Activated T-helper 2 cell treated with anti-CD3 and anti-CD28 coated beads, Interferon-gamma antibody, Interleukin-2, Interleukin-4, amounts not matched to agents 10 μg/mL and 5 μg/mL and 100 μg/mL, durations not matched to agents 14 hours and 24 hours and 36 hours (primary cell): ENCODE measurements at regions of chr13 and their contacts with region 1.

Region 1: GRCh38 chr13:52082601-52083000 is 46.3 kb downstream of the NEK5 start:
- DNase-seq: no peak
- H3K4me3 Mint-ChIP-seq: no peak overlapping the region
- H3K27ac Mint-ChIP-seq: no peak overlapping the region
- H3K4me1 Mint-ChIP-seq: no peaks in the 10 kb centered on the region
- H3K27me3 Mint-ChIP-seq: peaks cover 5% of the 10 kb centered on the region

Region 2: DNA sequence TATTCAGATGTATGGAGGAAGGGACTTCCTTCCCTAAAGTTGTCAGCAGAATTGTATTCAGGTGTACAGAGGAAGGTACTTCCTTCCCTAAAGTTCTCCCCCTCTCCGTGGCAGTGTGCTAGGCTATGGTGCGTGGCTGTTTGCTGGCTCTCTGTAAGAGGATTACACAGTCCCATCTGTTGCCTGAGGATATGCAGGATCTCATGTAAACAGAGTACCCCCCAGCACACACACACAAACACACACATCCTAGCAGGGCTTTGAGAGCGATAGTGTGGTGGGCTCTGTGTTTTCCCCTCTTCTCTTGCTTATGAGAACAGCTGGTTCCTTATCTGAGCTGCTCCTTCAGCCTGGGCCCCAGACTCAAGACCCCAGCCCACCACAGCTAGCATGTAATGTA is 36.0 kb after region 1 on chr13:
- intact Hi-C with region 1: loop called (anchors 2 kb)
- DNase-seq: no peak
- H3K4me3 Mint-ChIP-seq: no peak overlapping the region
- H3K27ac Mint-ChIP-seq: no peak overlapping the region
- H3K4me1 Mint-ChIP-seq: no peaks in the 10 kb centered on the region
- H3K27me3 Mint-ChIP-seq: peaks cover 32% of the 10 kb centered on the region